Aorta (tissue), 5 donors: ENCODE measurements at regions of chr12 and their contacts with region 1.

Region 1: DNA sequence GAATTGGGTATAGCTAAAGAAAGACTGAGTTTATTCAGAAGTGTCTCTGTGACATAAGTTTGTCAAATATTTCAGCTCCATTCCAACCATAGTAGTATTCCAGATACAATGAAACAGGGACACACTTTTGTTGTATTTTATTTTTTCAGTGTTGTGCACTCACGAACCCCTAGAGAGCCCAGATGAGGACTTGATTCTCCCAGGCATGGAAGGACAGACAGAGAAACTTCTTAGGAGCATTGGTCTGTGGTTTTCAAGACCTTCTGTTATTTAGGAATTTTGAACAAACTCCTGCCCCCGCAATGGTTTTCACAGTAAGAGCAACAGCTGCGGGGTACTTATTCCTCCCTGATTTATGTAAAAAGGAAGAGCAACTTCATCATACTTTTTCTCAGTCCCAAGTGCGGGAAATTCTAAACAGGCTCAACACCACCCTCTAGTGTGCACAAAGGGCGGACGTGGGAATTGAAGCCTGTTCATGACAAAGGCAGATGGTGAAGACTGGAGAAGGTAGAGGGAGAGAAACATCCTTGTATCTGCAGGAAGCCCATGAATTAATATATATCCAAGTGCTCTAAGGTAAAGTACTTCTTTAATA is 147.6 kb downstream of the PAH start:
- DNase-seq: peak in 1 of 2 donors; percentile 53
- ATAC-seq: peak; percentile 83
- H3K4me3 ChIP-seq: no peak overlapping the region
- H3K27ac ChIP-seq: no peak overlapping the region
- H3K4me1 ChIP-seq: no peaks in the 10 kb centered on the region
- H3K27me3 ChIP-seq: no peaks in the 10 kb centered on the region

Region 2: DNA sequence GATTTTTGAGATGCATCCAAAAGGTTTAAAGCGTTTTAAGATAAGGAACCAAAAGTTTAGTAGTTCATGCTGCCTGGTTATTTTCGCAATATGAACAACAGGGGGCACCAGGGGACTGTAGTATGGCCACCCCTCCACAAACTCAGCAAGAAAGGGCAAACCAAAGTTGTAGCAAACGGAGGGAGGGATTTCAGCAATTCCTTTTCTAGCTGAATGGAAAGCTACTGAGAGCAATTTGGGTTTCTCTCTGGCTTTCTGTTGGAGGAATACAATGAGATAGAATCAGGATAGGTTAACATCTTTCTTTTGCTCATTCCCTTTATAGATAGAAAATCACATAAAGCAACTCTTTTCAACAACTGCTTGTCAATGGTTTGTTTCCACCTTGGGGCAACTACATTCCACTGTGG is 829.6 kb before region 1 on chr12:
- intact Hi-C with region 1: loop called (anchors 10 kb)
- DNase-seq: no peak
- ATAC-seq: peak; percentile 85
- H3K4me3 ChIP-seq: no peak overlapping the region
- H3K27ac ChIP-seq: no peak overlapping the region
- H3K4me1 ChIP-seq: no peaks in the 10 kb centered on the region
- H3K27me3 ChIP-seq: no peaks in the 10 kb centered on the region

Region 3: GRCh38 chr12:102669036-102669435 is 100.4 kb before region 1 on chr12:
- intact Hi-C with region 1: no loop called
- DNase-seq: no peak
- ATAC-seq: no peak
- H3K4me3 ChIP-seq: no peak overlapping the region
- H3K27ac ChIP-seq: no peak overlapping the region
- H3K4me1 ChIP-seq: no peaks in the 10 kb centered on the region
- H3K27me3 ChIP-seq: no peaks in the 10 kb centered on the region